ENCODE measurements at regions of chr15 and their contacts with region 1.

Region 1: DNA sequence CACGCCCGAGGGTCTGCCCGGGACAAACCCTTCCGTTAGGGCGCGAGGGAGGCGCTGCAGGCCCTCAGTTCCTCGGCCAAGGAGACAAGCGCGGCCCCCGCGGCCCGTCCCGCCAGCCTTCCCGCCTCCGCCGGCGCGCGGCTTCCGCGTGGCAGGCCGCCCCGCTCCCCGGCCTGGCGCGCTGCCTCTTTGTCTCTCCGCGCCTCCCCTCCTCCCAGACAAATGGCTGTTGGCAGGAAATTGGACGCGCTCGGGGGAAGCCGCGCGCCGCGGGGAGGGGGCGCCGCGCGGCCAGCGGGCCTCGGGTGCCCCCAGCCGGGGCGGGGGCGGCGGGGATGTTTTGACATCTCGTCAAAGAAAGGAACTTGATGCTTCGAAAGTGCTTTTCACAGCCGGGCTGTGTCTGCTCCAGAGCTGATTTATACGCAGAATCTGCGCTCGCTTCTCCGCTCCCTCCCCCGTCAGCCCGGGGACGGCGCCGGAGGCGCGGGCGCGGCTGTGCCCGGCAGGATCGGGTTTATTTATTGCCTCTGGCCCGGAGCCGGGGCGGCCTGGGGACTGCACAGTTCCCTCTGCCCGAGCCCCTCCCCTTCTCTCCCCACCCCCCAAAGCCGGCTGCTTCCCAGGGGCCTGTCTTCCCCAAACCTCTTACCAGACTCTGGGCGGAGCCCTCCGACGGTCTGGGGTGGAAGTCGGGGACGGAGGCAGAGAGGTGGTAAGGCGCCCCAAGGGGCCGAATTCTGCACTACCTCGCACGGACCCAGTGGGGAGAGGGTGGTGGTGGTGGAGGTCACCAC is 20.7 kb downstream of the SHF start:
- DNase-seq: peak; percentile 87
- ATAC-seq: peak; percentile 91
- H3K4me3 Mint-ChIP-seq: peak overlapping the region; percentile 67
- H3K27ac Mint-ChIP-seq: peak overlapping the region; percentile 75
- H3K4me1 Mint-ChIP-seq: peaks cover 20% of the 10 kb centered on the region
- H3K27me3 Mint-ChIP-seq: no peaks in the 10 kb centered on the region

Region 2: DNA sequence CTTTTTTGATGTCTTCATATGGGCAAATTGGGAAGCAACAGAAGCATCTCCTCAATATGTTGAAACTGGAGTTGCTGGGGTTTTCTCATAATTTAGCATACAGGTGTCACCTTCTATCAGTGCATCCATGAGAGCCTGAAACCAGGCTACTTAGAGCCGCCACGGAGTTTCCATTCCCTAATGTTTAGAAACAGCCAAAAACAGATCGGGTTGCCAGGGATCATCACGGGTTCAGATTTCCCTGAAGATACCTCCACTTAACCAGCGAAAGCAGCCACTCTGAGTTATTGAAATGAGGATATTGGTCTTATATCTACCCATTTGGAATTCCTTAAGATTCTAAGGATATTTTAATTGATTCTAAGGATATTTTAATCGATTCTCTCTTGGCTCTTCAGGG is 196.0 kb before region 1 on chr15:
- CTCF ChIA-PET with region 1: no interaction called
- POLR2A ChIA-PET with region 1: no interaction called
- DNase-seq: no peak
- ATAC-seq: no peak
- H3K4me3 Mint-ChIP-seq: no peak overlapping the region
- H3K27ac Mint-ChIP-seq: no peak overlapping the region
- H3K4me1 Mint-ChIP-seq: no peaks in the 10 kb centered on the region
- H3K27me3 Mint-ChIP-seq: peaks cover 7% of the 10 kb centered on the region

Region 3: DNA sequence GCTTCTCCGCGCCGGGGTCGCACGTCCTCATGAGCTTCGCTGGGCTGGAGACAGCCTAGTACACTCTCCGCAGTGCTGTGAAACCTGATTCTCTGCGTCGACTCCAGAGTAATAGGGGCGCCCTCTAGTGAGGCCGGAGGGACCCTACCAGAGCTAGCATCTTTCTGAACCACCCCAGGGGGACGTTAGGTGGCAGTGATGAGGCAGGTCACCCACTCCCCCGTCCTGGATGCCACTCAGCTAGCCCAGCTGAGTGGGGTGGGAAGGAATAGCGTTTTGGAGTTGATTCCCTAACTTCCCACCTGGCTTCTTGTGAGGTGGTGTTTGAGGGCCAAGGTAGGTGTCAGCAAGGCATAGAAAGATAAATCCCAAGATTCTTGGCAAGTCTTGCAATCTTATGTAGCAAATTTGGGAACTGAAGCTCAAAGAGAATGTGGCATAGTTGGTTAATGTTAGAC is 48.9 kb before region 1 on chr15:
- CTCF ChIA-PET with region 1: interaction called, 18 read pairs
- POLR2A ChIA-PET with region 1: no interaction called
- DNase-seq: peak; percentile 89
- ATAC-seq: peak; percentile 98
- H3K4me3 Mint-ChIP-seq: peak overlapping the region; percentile 60
- H3K27ac Mint-ChIP-seq: no peak overlapping the region
- H3K4me1 Mint-ChIP-seq: peaks cover 22% of the 10 kb centered on the region
- H3K27me3 Mint-ChIP-seq: peaks cover 65% of the 10 kb centered on the region

Region 4: DNA sequence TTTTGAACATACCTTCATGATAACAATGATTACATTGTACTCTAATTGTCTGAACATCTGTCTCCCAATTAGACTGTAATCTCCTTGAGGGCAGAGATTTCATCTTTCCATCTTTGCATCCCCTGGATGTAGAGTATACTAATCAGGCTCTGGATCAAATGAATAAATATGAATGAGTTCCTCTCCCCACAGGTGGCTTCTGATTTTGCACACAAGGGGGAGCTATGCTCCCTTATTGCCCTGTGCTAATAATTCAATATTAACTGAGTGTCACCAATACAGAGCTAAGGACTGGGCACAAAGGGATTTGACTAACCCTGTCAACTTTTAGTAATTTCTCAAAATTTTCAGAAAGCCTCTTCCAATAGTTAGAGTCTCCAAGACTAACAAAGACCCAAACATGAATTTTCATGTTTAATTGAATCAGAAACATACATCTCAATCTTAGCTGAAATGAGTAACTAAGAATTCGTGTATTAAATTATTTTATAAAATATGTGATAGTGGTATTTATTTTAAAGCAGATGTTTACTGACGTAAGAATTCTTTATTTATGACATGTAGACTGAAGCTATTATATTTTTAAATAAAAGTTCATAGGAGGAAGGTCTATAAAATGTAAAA is 40.4 kb before region 1 on chr15:
- CTCF ChIA-PET with region 1: interaction called, 16 read pairs
- POLR2A ChIA-PET with region 1: no interaction called
- DNase-seq: peak; percentile 51
- ATAC-seq: no peak
- H3K4me3 Mint-ChIP-seq: no peak overlapping the region
- H3K27ac Mint-ChIP-seq: no peak overlapping the region
- H3K4me1 Mint-ChIP-seq: no peaks in the 10 kb centered on the region
- H3K27me3 Mint-ChIP-seq: peaks cover 59% of the 10 kb centered on the region

Region 5: GRCh38 chr15:45179221-45179985 is 12.4 kb after region 1 on chr15:
- CTCF ChIA-PET with region 1: interaction called, 16 read pairs
- POLR2A ChIA-PET with region 1: interaction called, 11 read pairs
- DNase-seq: peak; percentile 50
- ATAC-seq: peak; percentile 16
- H3K4me3 Mint-ChIP-seq: no peak overlapping the region
- H3K27ac Mint-ChIP-seq: no peak overlapping the region
- H3K4me1 Mint-ChIP-seq: peaks cover 22% of the 10 kb centered on the region
- H3K27me3 Mint-ChIP-seq: no peaks in the 10 kb centered on the region

Region 6: GRCh38 chr15:45198337-45199135 is 31.5 kb after region 1 on chr15:
- CTCF ChIA-PET with region 1: interaction called, 191 read pairs
- POLR2A ChIA-PET with region 1: interaction called, 16 read pairs
- DNase-seq: peak; percentile 97
- ATAC-seq: peak; percentile 74
- H3K4me3 Mint-ChIP-seq: no peak overlapping the region
- H3K27ac Mint-ChIP-seq: no peak overlapping the region
- H3K4me1 Mint-ChIP-seq: peaks cover 14% of the 10 kb centered on the region
- H3K27me3 Mint-ChIP-seq: peaks cover 2% of the 10 kb centered on the region

Region 7: DNA sequence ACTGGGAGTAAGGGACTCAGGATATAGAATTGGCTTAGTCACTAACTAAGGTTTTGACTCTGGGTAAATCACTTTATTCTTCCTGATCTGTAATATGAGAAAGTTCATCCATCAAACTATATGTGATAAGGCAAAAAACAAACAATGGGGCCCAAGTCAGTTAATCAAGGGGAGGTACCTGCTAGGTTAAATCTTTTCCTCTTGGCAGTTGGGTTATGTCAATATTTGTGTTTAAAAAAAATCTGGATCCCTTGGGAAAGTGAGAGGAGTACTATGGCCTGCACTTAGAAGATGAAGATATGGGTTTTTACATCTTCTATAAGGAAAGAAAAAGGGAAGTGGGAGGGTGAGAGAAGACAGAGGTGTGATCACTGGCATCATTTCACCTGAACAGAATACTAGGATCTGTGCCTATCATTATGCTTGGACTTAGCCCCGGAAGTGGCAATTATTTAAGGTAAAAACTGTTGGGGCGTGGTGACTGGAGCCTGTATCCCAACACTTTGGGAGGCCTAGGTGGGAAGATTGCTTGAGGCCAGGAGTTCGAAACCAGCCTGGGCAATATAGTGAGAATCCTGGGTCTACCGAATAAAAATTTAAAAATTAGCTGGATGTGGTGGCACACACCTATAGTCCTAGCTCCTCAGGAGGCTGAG is 82.2 kb after region 1 on chr15:
- CTCF ChIA-PET with region 1: no interaction called
- POLR2A ChIA-PET with region 1: no interaction called
- DNase-seq: no peak
- ATAC-seq: no peak
- H3K4me3 Mint-ChIP-seq: no peak overlapping the region
- H3K27ac Mint-ChIP-seq: no peak overlapping the region
- H3K4me1 Mint-ChIP-seq: no peaks in the 10 kb centered on the region
- H3K27me3 Mint-ChIP-seq: no peaks in the 10 kb centered on the region

Region 8: DNA sequence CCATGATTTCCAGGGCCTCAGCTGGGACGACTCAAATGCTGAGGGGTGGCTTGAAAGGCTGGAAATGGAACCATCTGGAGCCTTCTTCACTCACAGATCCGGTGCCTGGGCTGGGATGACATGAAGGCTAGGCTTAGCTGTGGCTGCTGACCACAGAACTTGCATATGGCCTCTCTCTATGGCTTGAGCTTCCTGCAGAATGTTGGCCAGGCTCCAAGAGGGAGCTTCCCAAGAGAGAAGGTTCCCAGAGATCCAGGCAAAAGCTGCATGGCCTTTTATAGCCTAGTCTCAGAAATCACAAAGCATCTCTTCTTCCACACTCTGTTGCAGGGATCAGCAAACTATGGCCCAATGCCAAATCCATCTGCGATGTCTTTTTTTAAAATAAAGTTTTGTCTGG is 166.5 kb after region 1 on chr15:
- CTCF ChIA-PET with region 1: no interaction called
- POLR2A ChIA-PET with region 1: no interaction called
- DNase-seq: no peak
- ATAC-seq: no peak
- H3K4me3 Mint-ChIP-seq: no peak overlapping the region
- H3K27ac Mint-ChIP-seq: no peak overlapping the region
- H3K4me1 Mint-ChIP-seq: peaks cover 11% of the 10 kb centered on the region
- H3K27me3 Mint-ChIP-seq: peaks cover 8% of the 10 kb centered on the region

Region 9: GRCh38 chr15:45391746-45392583 is 224.9 kb after region 1 on chr15:
- CTCF ChIA-PET with region 1: interaction called, 50 read pairs
- POLR2A ChIA-PET with region 1: no interaction called
- DNase-seq: no peak
- ATAC-seq: peak; percentile 5
- H3K4me3 Mint-ChIP-seq: no peak overlapping the region
- H3K27ac Mint-ChIP-seq: no peak overlapping the region
- H3K4me1 Mint-ChIP-seq: no peaks in the 10 kb centered on the region
- H3K27me3 Mint-ChIP-seq: peaks cover 20% of the 10 kb centered on the region

Region 10: DNA sequence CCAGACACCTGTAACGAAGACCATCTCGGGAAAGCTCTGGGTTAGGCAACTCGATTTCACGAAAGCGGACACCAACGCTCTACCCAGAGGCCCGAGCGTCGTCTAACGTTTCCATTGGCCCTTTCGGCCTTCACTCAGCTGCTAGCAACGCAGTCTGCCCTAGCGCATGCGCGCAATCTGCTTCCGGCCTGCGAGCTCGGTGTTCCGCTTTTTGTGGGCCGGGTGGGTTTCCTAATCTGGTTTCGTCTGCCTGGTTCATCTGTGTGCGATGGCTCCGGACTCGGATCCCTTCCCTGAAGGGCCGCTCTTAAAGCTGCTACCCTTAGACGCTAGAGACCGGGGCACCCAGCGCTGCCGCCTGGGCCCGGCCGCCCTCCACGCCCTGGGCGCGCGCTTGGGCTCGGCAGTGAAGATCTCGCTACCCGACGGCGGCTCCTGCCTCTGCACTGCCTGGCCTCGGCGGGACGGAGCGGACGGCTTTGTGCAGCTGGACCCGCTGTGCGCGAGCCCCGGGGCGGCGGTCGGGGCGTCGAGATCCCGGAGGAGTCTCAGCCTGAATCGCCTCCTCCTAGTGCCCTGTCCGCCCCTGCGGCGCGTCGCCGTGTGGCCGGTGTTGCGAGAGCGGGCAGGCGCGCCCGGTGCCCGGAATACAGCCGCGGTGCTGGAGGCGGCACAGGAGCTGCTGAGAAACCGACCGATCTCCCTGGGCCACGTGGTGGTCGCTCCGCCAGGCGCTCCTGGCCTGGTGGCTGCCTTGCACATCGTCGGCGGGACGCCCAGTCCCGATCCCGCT is 235.3 kb after region 1 on chr15:
- CTCF ChIA-PET with region 1: interaction called, 50 read pairs
- POLR2A ChIA-PET with region 1: interaction called, 9 read pairs
- DNase-seq: peak; percentile 98
- ATAC-seq: peak; percentile 96
- H3K4me3 Mint-ChIP-seq: peak overlapping the region; percentile 97
- H3K27ac Mint-ChIP-seq: peak overlapping the region; percentile 86
- H3K4me1 Mint-ChIP-seq: peaks cover 29% of the 10 kb centered on the region
- H3K27me3 Mint-ChIP-seq: no peaks in the 10 kb centered on the region

Region 11: DNA sequence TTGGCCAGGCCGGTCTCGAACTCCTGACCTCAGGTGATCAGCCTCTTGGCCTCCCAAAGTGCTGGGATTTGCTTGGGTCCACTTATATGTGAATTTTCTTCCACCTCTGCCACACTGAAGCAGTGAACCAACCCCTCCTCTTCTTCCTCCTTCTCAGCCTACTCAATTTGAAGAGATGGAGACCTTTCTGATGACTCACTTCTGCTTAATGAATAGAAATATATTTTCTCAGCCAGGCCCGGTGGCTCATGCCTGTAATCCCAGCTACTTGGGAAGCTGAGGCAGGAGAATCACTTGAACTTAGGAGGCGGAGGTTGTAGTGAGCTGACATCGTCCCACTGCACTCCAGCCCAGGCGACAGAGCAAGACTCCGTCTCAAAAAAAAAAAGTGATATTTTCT is 258.1 kb after region 1 on chr15:
- CTCF ChIA-PET with region 1: no interaction called
- POLR2A ChIA-PET with region 1: no interaction called
- DNase-seq: no peak
- ATAC-seq: no peak
- H3K4me3 Mint-ChIP-seq: no peak overlapping the region
- H3K27ac Mint-ChIP-seq: no peak overlapping the region
- H3K4me1 Mint-ChIP-seq: peaks cover 3% of the 10 kb centered on the region
- H3K27me3 Mint-ChIP-seq: peaks cover 3% of the 10 kb centered on the region